ENCODE measurements at regions of chr9 and their contacts with region 1.

Region 1: DNA sequence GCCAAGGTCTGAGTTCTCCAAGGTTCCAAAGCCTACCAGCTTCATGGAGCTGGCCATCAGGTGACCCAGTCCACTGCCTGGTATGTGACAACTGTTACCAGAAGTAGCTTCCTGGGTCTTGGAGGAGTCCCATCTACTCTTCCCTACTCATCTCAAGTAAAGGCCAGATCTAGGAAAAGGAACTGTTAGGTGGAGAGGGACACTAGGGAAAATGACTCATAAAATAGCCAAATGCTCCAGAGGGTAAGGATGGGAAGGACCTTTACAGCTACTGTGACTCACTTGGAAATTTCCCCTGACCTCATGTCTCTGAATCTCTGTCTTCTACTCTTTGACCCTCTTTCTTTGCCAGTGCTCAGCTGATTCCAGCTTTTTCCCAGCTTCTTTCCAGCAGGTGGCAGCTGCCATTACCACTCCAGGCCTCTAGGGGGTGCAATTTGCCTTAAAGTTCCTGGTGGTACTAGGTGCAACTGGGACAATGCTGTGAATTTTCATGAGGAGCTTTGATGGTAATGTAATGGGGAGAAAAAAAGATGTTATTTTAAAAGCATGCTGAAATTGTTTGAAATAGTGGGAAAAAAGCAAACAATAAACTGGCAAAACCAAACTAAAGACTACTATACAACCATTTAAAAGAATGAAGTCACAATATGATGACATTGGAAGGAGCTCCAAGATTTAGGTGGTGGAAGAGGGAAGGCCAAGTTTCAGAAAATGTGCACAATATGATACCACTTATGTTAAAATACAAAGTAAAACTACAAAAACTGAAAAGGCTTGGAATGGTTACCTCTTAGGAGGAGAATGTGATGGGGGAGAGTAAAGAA is 27.1 kb upstream of the MYORG start:
- DNase-seq: peak; percentile 34 to 67 (median 45)
- H3K4me3 ChIP-seq: no peak overlapping the region
- H3K4me3 Mint-ChIP-seq: no peak overlapping the region
- H3K27ac ChIP-seq: no peak overlapping the region
- H3K27ac Mint-ChIP-seq: no peak overlapping the region
- H3K4me1 ChIP-seq: no peaks in the 10 kb centered on the region
- H3K4me1 Mint-ChIP-seq: no peaks in the 10 kb centered on the region
- H3K27me3 ChIP-seq: no peaks in the 10 kb centered on the region
- H3K27me3 Mint-ChIP-seq: no peaks in the 10 kb centered on the region

Region 2: GRCh38 chr9:34376596-34377403 is 27.0 kb before region 1 on chr9 and contains the start of gene MYORG:
- CTCF ChIA-PET with region 1: interaction called, 10 read pairs
- POLR2A ChIA-PET with region 1: no interaction called
- DNase-seq: peak; percentile 94 to 98 (median 96)
- H3K4me3 ChIP-seq: peak within 1 kb of the TSS; percentile 74
- H3K4me3 Mint-ChIP-seq: peak within 1 kb of the TSS; percentile 81 to 96 (median 94)
- H3K27ac ChIP-seq: peak within 1 kb of the TSS; percentile 64
- H3K27ac Mint-ChIP-seq: peak within 1 kb of the TSS; percentile 84 to 96 (median 95)
- H3K4me1 ChIP-seq: peaks cover 38% of the 10 kb centered on the region
- H3K4me1 Mint-ChIP-seq: peaks cover 37 to 56% (median 43%) of the 10 kb centered on the region in 3 donors
- H3K27me3 ChIP-seq: no peaks in the 10 kb centered on the region
- H3K27me3 Mint-ChIP-seq: no peaks in the 10 kb centered on the region
- total RNA-seq, gene MYORG: 2.3 to 2.4 TPM

Region 3: GRCh38 chr9:34500623-34501267 is 97.0 kb after region 1 on chr9:
- CTCF ChIA-PET with region 1: interaction called, 21 read pairs
- POLR2A ChIA-PET with region 1: no interaction called
- DNase-seq: peak; percentile 50 to 79 (median 61)
- H3K4me3 ChIP-seq: no peak overlapping the region
- H3K4me3 Mint-ChIP-seq: no peak overlapping the region
- H3K27ac ChIP-seq: no peak overlapping the region
- H3K27ac Mint-ChIP-seq: no peak overlapping the region
- H3K4me1 ChIP-seq: no peaks in the 10 kb centered on the region
- H3K4me1 Mint-ChIP-seq: peaks cover 0 to 2% (median 0%) of the 10 kb centered on the region in 3 donors
- H3K27me3 ChIP-seq: no peaks in the 10 kb centered on the region
- H3K27me3 Mint-ChIP-seq: peaks cover 10 to 20% of the 10 kb centered on the region in 2 donors

Region 4: GRCh38 chr9:34591248-34591916 is 187.6 kb after region 1 on chr9:
- CTCF ChIA-PET with region 1: interaction called, 22 read pairs
- POLR2A ChIA-PET with region 1: no interaction called
- DNase-seq: peak; percentile 62 to 76 (median 68)
- H3K4me3 ChIP-seq: peak overlapping the region; percentile 66
- H3K4me3 Mint-ChIP-seq: peak overlapping the region; percentile 67 to 89 (median 76)
- H3K27ac ChIP-seq: no peak overlapping the region
- H3K27ac Mint-ChIP-seq: no peak overlapping the region
- H3K4me1 ChIP-seq: peaks cover 15% of the 10 kb centered on the region
- H3K4me1 Mint-ChIP-seq: peaks cover 17 to 40% (median 23%) of the 10 kb centered on the region in 3 donors
- H3K27me3 ChIP-seq: peaks cover 59% of the 10 kb centered on the region
- H3K27me3 Mint-ChIP-seq: peaks cover 55 to 78% of the 10 kb centered on the region in 2 donors

Measured in CD8-positive, alpha-beta memory T cell (primary cell).